Right ventricle myocardium superior (tissue), 1 donor: ENCODE measurements at regions of chr1 and their contacts with region 1.

Region 1: DNA sequence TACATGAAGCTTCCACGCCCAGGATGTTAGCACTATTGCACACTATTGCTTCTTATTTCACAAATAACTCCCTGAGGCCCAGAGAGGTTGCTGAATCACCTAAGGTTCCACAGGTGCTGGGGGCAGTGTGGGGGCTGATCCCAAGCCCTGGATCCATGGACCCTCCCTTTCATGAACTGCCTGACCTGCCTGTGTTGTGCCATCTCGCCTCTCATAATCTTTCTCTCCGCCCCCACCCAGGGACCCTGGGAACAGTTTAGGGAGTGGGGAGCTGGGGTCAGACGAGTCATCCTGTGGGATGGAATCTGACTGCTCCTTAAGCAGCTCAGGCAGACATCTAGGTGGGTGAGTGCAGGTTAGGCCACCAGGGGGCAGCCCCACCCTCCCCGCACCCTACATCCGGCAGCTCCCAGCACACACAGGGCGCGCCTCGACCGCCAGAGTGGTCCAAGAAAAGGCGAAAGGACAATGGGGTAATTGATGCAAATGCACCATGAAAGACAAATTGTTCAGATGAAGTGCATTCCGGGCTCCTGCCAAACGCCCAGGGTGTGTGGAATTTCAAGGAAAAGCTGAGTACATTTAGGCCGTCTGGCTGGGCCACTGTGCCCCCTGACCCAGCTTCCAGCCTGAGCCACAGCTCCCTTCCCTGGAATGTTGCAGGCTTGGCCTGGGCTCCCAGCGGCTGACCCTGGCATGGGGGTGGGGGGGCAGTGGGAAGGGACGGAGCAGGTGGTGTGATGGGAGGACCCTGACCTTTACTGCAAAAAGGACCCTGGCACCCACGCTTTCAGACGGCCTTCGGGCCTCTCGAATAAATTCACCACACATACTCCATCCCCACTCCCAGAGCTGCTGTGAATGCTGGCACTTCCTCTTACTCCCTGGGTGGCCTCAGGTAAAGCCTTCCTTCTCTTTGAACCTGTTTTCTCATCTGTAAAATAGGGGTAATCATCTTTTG is 20.8 kb downstream of the PHLDA3 start:
- DNase-seq: peak; percentile 90
- ATAC-seq: peak; percentile 90

Region 2: DNA sequence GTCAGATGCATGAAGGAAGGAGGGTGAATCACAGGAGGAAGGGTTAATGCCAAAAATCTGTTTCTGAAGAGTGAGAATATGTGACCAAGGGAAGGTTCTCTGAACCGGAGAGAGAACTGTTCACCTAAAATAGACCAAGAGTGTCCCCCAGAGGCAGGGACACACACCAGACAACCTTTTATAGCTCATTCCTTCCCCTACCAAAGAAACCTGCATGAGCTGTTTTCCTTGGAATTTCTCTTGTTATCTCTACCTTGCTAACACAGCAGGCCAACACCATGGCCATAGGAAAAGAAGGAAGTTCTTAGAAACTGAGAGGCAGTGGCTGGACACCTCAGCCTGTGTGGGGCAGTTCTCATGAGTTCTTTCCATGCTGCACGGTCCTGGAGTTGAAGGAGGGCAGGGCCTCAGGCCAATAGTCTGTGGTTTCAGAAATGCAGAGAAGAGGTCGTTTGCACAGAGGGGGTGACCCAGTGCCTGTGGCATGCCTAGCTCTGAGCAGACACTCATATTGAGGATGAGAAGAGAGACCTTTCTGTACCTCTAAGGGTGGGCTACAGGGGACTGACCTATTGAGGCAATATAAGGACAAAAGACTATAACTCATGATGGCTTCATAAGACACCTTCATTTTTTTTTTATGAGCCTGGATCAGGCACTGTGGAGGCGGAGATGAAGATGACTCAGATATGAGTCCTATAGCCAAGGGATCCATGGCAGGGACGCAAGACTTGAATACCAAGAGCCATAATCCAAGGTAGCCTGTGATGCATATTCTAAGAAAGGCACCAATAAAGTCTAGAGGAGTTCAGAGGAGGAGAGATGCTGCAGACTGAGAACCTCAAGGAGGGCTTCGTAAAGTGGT is 218.2 kb before region 1 on chr1:
- intact Hi-C with region 1: no loop called
- DNase-seq: no peak
- ATAC-seq: no peak

Region 3: GRCh38 chr1:201481761-201482493 is 33.7 kb after region 1 on chr1:
- intact Hi-C with region 1: loop called (anchors 2 kb)
- DNase-seq: peak; percentile 89
- ATAC-seq: peak; percentile 91

Region 4: DNA sequence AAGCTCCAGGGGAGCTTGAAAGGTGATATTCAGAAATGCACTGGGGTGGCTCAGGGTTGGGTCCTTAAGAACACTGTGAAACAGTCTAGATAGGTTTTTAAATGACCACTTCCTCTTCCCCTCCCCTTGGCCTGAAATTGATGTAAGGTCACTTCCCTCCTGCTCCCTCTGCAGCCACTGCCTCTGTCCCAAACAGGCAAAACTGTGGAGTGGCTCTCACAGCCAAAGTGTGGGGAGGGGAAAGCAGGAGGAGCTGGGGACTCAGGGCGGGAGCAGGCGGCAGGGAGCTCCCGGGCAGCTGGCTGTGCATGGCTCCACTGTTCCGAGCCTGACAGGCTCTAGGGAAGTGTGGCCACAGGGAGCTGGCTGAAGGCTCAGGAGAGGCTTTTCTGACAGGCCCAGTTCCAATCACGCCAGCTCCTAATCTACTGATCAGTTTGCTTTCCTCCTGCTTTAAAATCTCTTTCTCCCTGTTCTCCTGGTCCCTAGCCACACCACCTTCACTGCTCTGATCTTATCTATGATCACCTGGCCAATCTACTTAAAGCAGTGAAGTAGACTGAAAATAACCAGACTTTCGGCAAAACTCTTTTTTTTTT is 63.8 kb after region 1 on chr1:
- intact Hi-C with region 1: loop called (anchors 5 kb)
- DNase-seq: peak; percentile 82
- ATAC-seq: peak; percentile 82